ENCODE measurements at regions of chr14 and their contacts with region 1.

Region 1: DNA sequence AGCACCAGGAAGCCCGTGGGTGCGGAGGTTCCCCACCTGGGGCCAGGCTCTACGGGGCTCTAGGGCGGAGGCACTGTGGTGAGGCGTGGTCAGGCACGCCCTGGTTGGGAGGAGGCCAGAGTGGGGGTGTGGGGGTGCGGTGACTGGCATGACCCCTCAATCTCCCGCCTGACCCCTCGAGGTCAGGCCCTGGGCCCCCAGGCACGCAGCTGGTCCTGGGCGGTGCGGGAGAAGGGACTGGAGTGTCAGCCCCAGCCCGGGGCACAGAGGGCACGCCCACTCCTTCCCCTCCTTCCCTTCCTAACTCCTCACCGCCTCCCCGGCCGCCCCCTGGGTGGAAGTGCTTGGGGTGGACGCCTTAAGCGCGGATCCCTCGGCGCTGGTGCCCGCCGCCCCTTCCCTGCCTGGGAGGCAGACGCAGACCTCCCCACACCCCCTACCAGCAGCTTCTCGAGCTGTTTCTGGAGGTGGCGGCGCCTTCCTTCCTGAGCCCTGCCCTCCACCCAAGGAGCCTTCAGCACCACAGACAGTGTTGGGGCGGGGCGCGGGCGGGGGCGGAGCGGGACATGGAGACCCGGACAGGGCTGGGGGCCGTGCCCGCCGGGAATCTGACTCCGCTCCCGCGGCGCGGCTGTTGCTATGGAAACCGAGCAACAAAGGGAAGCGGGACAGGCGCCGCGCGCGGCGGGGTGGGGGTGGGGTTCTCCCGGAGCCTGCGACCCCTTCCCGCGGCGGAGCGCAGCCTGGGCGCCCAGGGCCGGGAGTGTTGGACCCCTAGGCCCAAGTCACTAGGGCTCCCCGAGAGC is 741 bp upstream of the CRIP2 start:
- DNase-seq: peak; percentile 93
- H3K27ac ChIP-seq: peak overlapping the region; percentile 100
- CTCF ChIP-seq: no peak

Region 2: DNA sequence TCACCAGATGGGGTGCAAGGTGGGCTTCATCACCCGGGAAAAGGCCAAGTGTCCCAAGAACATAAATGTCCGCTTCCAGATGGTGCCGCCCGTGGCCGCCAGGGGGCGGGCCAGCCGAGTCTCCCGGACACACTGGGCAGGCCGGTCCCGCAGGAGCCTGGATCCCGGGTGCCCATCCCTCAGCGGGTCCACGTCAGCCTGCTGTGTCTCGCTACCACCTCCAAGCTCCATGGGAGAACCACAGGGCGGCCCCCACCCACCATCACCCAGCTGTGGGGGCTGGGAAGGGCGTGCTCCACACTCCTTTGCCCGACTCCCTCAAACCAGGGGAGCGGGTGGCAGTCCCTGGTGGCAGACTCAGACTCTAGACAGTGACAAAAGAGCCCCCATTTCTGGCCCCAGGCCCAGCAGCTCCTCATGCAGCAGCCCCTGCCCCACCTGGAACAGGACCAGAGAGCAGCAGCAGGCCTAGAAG is 270.8 kb before region 1 on chr14:
- CTCF ChIA-PET with region 1: no interaction called
- POLR2A ChIA-PET with region 1: no interaction called
- DNase-seq: peak; percentile 71
- H3K27ac ChIP-seq: no peak overlapping the region
- CTCF ChIP-seq: peak; percentile 94

Region 3: GRCh38 chr14:105490572-105491366 is 16.9 kb after region 1 on chr14 and contains the start of gene TEDC1:
- CTCF ChIA-PET with region 1: interaction called, 19 read pairs
- POLR2A ChIA-PET with region 1: no interaction called
- DNase-seq: peak; percentile 98
- H3K27ac ChIP-seq: peak within 1 kb of the TSS; percentile 100
- CTCF ChIP-seq: peak; percentile 93